A549 (cell line): ENCODE measurements at regions of chr1 and their contacts with region 1.

Region 1: DNA sequence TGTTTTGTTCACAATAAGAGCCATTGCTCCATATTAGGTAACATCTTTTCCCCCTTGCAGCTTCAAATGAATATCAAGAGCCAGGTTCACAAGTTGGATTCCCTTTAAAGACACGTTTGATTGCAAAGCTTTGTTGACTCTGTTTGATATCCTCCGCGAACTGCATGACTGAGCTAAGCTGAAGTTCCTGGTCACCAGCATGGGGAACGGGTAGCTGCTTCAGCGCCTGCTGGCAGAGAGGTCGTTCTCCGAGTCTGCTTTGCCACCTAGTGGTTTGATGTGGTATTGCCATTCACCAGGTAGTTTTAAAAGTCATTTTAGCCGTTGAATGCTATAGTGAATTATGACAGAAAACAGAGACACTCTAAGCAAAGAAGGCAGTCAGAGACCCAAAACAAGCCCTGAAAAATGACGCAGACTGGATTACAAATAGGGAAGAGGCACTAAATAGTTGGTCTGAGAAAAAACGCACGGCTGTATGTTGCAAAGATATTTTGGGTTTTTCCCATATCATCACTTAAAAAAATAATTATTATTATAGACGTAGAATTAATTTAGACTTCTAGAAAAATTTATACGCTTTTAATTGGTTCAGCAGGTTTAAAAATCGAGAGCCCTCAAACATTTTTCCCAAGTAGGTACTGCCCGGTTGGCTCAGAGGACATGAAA is 193.5 kb upstream of the FMN2 start:
- DNase-seq: peak; percentile 76 to 84
- ATAC-seq: peak; percentile 86 to 95
- H3K4me3 ChIP-seq: no peak overlapping the region
- H3K27ac ChIP-seq: peak overlapping the region; percentile 26 to 74
- H3K4me1 ChIP-seq: peaks cover 22% of the 10 kb centered on the region
- CTCF ChIP-seq: peak; percentile 93
- EP300 ChIP-seq: no peak
- POLR2A ChIP-seq: no peak
- RAD21 ChIP-seq: peak; percentile 99

Region 2: GRCh38 chr1:239792157-239792556 is 106.0 kb before region 1 on chr1:
- CTCF ChIA-PET with region 1: interaction called, 23 read pairs
- POLR2A ChIA-PET with region 1: no interaction called
- DNase-seq: peak in 1 of 2 experiments; percentile 38
- ATAC-seq: peak; percentile 34 to 74; a peak in 3 of 6 replicates
- H3K4me3 ChIP-seq: no peak overlapping the region
- H3K27ac ChIP-seq: no peak overlapping the region
- H3K4me1 ChIP-seq: no peaks in the 10 kb centered on the region
- CTCF ChIP-seq: peak; percentile 25; the same call in 2 of the 3 replicates
- EP300 ChIP-seq: no peak
- POLR2A ChIP-seq: no peak
- RAD21 ChIP-seq: peak; percentile 63 to 72

Region 3: DNA sequence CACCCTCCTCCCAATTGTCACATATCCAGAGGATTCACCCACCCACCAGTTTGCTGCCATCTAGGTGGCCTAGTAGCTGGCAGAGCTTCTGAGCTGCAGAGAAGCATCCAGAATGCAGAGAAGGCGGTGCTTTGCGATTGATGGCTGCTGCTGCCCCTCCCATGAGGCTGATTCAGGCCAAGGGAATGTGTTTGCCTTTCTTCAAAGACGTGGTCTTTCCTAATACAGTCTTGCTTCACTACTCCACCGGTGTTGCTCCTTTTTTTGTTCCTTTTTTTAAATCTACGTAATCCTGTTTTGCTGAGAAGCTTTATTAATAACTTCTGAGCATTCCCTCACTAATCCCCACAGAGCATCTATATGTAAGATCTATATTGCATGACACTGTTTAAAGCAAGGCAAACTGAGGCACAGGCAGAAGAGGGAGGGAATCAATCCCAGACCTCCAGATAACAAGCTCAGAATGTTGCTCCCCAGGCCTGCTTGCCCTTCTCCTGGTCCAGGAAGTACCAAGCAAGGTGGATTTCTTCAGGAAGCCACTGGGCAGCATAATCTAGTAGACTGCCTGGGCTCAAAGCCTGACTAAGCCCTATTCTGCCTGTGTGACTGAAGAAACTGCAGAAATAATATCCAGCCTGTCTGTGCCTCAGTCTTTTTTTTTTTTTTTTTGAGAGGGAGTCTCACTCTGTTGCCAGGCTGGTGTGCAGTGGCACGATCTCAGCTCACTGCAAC is 81.9 kb before region 1 on chr1:
- CTCF ChIA-PET with region 1: interaction called, 16 read pairs
- POLR2A ChIA-PET with region 1: no interaction called
- DNase-seq: peak; percentile 85 to 89
- ATAC-seq: peak; percentile 87 to 92
- H3K4me3 ChIP-seq: no peak overlapping the region
- H3K27ac ChIP-seq: peak overlapping the region; percentile 66 to 89
- H3K4me1 ChIP-seq: peaks cover 36% of the 10 kb centered on the region
- CTCF ChIP-seq: 0 out of 3 replicates have a peak, but pooled peaks have one; percentile 18
- EP300 ChIP-seq: peak; percentile 86 to 88; a peak in 4 of 5 replicates
- POLR2A ChIP-seq: no peak
- RAD21 ChIP-seq: peak; percentile 2 to 54; a peak in 2 of 5 replicates